Endothelial cell of umbilical vein (primary cell): ENCODE measurements at regions of chr6 and their contacts with region 1.

Region 1: GRCh38 chr6:54060286-54060685 is 51.0 kb upstream of the MLIP start:
- DNase-seq: peak; percentile 59
- H3K4me3 ChIP-seq: no peak overlapping the region
- H3K27ac ChIP-seq: peak overlapping the region; percentile 53
- H3K4me1 ChIP-seq: peaks cover 15% of the 10 kb centered on the region
- H3K27me3 ChIP-seq: no peaks in the 10 kb centered on the region
- CTCF ChIP-seq: no peak
- POLR2A ChIP-seq: no peak

Region 2: GRCh38 chr6:54191461-54191860 is 131.2 kb after region 1 on chr6:
- CTCF ChIA-PET with region 1: no interaction called
- POLR2A ChIA-PET with region 1: no interaction called
- dilution Hi-C with region 1: no loop called
- intact Hi-C with region 1: loop called (anchors 1 kb)
- DNase-seq: peak; percentile 79
- H3K4me3 ChIP-seq: no peak overlapping the region
- H3K27ac ChIP-seq: no peak overlapping the region
- H3K4me1 ChIP-seq: peaks cover 25% of the 10 kb centered on the region
- H3K27me3 ChIP-seq: no peaks in the 10 kb centered on the region
- CTCF ChIP-seq: no peak
- POLR2A ChIP-seq: no peak